Brain microvascular endothelial cell (primary cell): ENCODE measurements at regions of chr16 and their contacts with region 1.

Region 1: DNA sequence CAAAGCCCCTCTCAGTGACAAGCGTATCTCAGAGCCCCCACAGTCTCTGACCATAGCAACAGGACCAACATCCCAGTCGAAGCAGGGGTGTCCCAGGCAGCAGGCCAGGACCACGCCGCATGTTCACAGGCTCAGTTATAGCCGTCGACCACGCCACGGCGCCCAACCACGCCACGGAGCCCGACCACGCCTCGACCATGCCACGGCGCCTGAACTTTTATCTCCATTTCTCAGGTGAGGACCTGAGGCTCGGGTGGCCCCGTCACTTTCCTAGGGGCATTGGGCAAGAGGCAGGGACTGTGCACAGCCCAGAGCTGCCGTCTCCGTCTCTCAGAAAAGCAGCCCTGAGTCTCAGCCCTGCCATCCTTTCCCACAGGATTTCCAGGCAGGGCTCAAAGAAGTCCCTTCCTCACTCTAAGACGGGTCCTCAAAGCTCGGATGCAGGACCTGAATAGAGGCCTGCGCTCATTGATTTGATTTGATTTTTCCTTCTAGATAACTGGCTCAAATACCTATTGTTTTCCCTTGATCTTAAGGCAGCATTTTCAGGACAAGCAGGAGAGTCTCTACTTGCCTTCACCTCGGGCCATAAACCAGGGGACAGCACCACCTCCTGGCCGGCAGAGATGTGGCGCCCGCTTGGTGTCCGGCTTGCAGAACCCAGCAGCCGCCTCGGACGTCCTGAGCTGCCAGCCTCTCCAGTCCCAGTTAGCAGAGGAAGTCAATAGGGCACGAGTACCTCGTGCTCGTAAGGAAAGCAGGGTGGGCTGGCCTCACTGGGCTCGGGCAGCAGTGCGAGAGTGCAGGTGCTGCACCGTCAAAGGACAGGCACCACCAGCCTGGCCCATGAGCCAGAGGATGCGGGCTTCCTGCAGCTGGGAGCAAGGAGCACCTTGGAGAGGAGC is 38.7 kb downstream of the C16orf95 start:
- DNase-seq: peak; percentile 77
- H3K4me3 ChIP-seq: no peak overlapping the region
- H3K27ac ChIP-seq: no peak overlapping the region
- H3K27me3 ChIP-seq: no peaks in the 10 kb centered on the region
- CTCF ChIP-seq: peak; percentile 96

Region 2: GRCh38 chr16:86554917-86555703 is 723.3 kb before region 1 on chr16 and contains the start of gene MTHFSD:
- in situ Hi-C with region 1: loop called (anchors 25 kb)
- DNase-seq: peak; percentile 84
- H3K4me3 ChIP-seq: peak within 1 kb of the TSS; percentile 96
- H3K27ac ChIP-seq: peak within 1 kb of the TSS; percentile 70
- H3K27me3 ChIP-seq: no peaks in the 10 kb centered on the region
- CTCF ChIP-seq: no peak

Region 3: GRCh38 chr16:86901491-86902260 is 376.8 kb before region 1 on chr16:
- in situ Hi-C with region 1: no loop called
- DNase-seq: peak; percentile 69
- H3K4me3 ChIP-seq: no peak overlapping the region
- H3K27ac ChIP-seq: no peak overlapping the region
- H3K27me3 ChIP-seq: no peaks in the 10 kb centered on the region
- CTCF ChIP-seq: peak; percentile 42

Region 4: GRCh38 chr16:87059994-87060986 is 218.2 kb before region 1 on chr16:
- in situ Hi-C with region 1: no loop called
- DNase-seq: peak; percentile 53
- H3K4me3 ChIP-seq: peak overlapping the region; percentile 39
- H3K27ac ChIP-seq: no peak overlapping the region
- H3K27me3 ChIP-seq: no peaks in the 10 kb centered on the region
- CTCF ChIP-seq: peak; percentile 59